ENCODE measurements at regions of chr21 and their contacts with region 1.

Region 1: GRCh38 chr21:17780539-17780938 is 38.6 kb downstream of the C21orf91 start:
- DNase-seq: peak; percentile 39
- H3K4me3 Mint-ChIP-seq: peak overlapping the region; percentile 53
- H3K27ac Mint-ChIP-seq: peak overlapping the region; percentile 82
- H3K4me1 Mint-ChIP-seq: peaks cover 90% of the 10 kb centered on the region
- H3K27me3 Mint-ChIP-seq: no peaks in the 10 kb centered on the region

Region 2: GRCh38 chr21:17611414-17612022 is 169.0 kb before region 1 on chr21:
- intact Hi-C with region 1: loop called (anchors 1 kb)
- DNase-seq: peak; percentile 76
- H3K4me3 Mint-ChIP-seq: peak overlapping the region; percentile 88
- H3K27ac Mint-ChIP-seq: peak overlapping the region; percentile 97
- H3K4me1 Mint-ChIP-seq: peaks cover 58% of the 10 kb centered on the region
- H3K27me3 Mint-ChIP-seq: no peaks in the 10 kb centered on the region

Region 3: GRCh38 chr21:17679002-17679600 is 101.4 kb before region 1 on chr21:
- intact Hi-C with region 1: loop called (anchors 2 kb)
- DNase-seq: peak; percentile 24
- H3K4me3 Mint-ChIP-seq: no peak overlapping the region
- H3K27ac Mint-ChIP-seq: no peak overlapping the region
- H3K4me1 Mint-ChIP-seq: no peaks in the 10 kb centered on the region
- H3K27me3 Mint-ChIP-seq: peaks cover 2% of the 10 kb centered on the region

Region 4: DNA sequence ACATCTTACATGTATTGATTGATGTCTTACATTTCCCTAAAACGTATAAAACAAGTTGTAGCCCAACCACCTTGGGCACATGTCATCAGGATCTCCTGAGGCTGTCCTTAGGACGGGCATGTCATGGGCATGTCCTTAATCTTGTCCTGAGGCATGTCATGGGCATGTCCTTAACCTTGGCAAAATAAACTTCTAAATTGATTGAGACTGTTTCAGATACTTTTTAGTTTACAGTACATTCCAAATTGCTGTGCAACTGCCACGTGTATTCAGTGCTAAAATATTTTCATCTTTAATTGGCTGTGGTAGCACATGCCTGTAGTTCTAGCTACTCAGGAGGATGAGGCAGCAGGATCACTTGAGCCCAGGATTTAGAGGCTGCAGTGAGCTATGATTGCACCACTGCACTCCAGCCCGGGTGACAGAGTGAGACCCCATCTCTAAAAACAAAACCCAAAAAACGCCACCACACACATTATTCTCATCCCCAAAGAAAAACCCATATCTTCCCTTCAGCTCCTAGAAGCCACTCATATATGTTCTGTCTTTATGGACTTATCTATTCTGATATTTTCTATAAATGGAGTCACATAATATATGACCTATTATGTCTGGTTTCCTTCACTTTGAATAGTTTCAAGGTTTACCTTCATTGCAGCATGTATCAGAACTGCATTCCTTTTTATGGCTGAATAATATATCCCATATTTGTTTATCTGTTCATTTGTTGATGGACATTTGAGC is 71.8 kb before region 1 on chr21:
- intact Hi-C with region 1: loop called (anchors 1 kb)
- DNase-seq: no peak
- H3K4me3 Mint-ChIP-seq: no peak overlapping the region
- H3K27ac Mint-ChIP-seq: peak overlapping the region; percentile 42
- H3K4me1 Mint-ChIP-seq: peaks cover 31% of the 10 kb centered on the region
- H3K27me3 Mint-ChIP-seq: peaks cover 10% of the 10 kb centered on the region

Region 5: DNA sequence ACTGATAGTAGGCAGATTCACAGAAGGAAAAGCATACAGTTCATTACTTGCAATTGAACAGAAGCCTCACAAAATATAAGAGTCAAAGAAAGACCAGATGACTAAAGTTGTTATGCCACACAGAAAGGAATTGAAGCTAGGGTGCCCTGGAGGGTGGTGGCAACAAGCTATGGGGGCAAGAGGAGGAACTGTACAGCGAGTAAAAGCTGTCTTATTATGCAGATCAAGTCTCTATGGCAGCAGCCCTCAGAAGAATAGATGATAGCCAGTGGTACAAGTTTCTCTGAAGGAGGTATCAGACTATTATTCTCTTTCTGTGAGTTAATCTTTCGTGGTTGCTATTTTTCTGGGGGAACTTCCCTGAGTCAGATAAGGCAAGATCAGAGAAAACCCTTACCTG is 33.6 kb before region 1 on chr21:
- intact Hi-C with region 1: loop called (anchors 2 kb)
- DNase-seq: no peak
- H3K4me3 Mint-ChIP-seq: no peak overlapping the region
- H3K27ac Mint-ChIP-seq: no peak overlapping the region
- H3K4me1 Mint-ChIP-seq: peaks cover 10% of the 10 kb centered on the region
- H3K27me3 Mint-ChIP-seq: peaks cover 2% of the 10 kb centered on the region

Region 6: DNA sequence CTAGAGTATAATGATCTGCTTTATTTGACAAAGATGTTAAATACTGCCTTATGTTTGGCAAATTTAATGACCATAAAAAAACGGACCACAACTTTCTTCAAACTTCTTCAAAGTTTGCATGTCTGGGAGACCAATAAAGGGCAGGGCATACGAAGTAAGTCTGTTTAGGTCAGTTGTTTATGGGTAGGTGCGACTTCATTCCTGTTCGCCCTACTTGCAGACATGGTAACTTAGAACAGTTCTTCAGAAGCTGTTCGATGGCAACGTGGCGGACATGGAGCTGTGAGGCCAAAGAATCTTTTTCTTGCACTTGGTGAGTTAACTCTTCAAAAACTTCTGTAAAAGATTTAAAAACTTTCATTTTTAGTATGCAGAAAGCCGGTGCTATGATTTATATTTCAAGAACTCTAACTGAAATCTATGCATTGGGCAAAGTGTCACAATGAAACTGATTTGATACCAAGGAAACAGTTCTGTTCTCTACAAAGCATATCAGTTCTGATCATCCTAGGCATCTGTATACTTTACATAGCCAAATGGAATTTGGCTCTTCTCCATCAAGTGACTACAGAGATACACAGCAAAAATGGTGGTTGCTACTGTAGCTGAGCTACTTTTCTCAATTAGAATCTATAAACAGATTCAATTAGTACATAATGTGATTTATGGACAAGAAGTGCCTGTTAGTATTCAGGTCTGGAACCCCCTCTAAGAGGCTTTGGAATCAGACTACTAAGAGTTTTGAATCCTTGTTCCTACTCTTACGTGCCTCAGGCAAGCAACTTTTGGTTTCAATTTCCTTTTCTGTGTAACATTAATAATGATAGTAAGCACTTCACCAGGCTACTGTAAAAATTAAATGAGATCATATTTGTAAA is 12.9 kb after region 1 on chr21:
- intact Hi-C with region 1: loop called (anchors 1 kb)
- DNase-seq: no peak
- H3K4me3 Mint-ChIP-seq: peak overlapping the region; percentile 78
- H3K27ac Mint-ChIP-seq: peak overlapping the region; percentile 80
- H3K4me1 Mint-ChIP-seq: peaks cover 78% of the 10 kb centered on the region
- H3K27me3 Mint-ChIP-seq: no peaks in the 10 kb centered on the region

Region 7: GRCh38 chr21:18204931-18205330 is 424.4 kb after region 1 on chr21:
- intact Hi-C with region 1: no loop called
- DNase-seq: no peak
- H3K4me3 Mint-ChIP-seq: no peak overlapping the region
- H3K27ac Mint-ChIP-seq: no peak overlapping the region
- H3K4me1 Mint-ChIP-seq: no peaks in the 10 kb centered on the region
- H3K27me3 Mint-ChIP-seq: no peaks in the 10 kb centered on the region

Region 8: DNA sequence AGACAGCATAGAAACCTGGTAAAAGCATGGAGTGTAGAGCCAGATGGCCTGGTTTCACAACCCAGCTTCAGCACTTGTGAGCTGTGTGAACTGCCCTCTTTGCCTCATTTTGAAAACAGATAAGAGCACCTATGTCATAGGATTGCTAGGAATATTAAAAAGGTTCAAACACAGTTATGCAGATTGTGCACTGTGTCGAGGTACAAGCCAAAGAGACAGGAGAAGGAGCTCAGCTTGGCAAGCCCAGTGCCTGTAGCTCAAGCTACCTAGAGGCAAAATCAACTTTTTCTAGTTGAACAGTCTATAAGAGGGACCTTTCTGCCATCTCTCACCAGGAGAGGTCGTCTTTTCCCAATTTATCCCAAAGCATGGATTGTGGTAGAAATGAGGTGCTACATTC is 469.1 kb after region 1 on chr21:
- intact Hi-C with region 1: loop called (anchors 5 kb)
- DNase-seq: no peak
- H3K4me3 Mint-ChIP-seq: no peak overlapping the region
- H3K27ac Mint-ChIP-seq: no peak overlapping the region
- H3K4me1 Mint-ChIP-seq: no peaks in the 10 kb centered on the region
- H3K27me3 Mint-ChIP-seq: peaks cover 6% of the 10 kb centered on the region